ENCODE measurements at regions of chr11 and their contacts with region 1.

Region 1: DNA sequence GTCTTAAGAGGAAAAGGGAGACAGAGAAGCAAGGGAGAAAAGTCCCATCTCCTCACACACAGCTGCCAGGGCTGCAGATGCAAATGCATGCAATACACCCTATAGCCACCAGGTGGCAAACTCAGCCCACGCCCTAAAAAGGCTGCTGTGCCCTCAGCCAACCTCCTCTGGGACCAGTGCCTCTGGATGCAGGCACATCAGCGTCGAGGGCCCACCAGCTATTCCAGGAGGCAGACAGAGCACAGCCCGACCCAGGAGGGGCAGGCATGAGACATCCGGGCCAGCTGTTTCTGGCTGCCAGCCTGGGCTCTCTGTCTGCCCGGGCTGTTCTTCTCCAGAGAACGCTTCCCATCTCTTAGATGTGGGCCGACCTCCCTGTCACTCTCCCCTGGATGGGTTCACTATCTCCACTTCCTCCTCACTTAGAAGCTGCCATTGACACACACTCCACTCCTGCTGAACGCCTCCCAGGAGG is 39.7 kb downstream of the TPBGL start:
- DNase-seq: peak; percentile 79 to 91 (median 90)
- ATAC-seq: peak; percentile 85 to 86
- H3K4me3 ChIP-seq: no peak overlapping the region
- H3K27ac ChIP-seq: peak overlapping the region; percentile 2
- H3K4me1 ChIP-seq: peaks cover 3% of the 10 kb centered on the region
- H3K27me3 ChIP-seq: no peaks in the 10 kb centered on the region

Region 2: DNA sequence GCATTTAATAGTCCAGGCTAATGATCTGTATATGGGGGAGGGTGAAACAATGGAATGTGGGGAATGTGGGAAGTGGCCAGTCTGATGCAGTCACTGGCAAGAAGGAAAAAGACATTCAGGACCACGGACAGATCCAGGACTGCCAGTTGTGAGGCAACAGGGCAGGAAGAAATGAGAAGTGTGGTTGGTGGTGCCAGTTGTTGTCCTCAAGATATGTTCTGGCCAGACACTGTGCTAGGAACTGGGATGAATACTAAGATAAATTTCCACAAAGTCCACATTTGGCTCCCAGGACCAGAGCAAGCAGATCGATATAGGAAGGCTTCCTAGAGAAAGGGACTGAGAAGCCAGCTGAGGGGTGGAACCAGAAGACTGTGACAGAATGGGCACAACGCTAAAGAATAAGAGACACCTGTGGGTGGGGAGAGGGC is 46.5 kb before region 1 on chr11:
- intact Hi-C with region 1: no loop called
- DNase-seq: no peak
- ATAC-seq: no peak
- H3K4me3 ChIP-seq: no peak overlapping the region
- H3K27ac ChIP-seq: no peak overlapping the region
- H3K4me1 ChIP-seq: no peaks in the 10 kb centered on the region
- H3K27me3 ChIP-seq: no peaks in the 10 kb centered on the region

Region 3: DNA sequence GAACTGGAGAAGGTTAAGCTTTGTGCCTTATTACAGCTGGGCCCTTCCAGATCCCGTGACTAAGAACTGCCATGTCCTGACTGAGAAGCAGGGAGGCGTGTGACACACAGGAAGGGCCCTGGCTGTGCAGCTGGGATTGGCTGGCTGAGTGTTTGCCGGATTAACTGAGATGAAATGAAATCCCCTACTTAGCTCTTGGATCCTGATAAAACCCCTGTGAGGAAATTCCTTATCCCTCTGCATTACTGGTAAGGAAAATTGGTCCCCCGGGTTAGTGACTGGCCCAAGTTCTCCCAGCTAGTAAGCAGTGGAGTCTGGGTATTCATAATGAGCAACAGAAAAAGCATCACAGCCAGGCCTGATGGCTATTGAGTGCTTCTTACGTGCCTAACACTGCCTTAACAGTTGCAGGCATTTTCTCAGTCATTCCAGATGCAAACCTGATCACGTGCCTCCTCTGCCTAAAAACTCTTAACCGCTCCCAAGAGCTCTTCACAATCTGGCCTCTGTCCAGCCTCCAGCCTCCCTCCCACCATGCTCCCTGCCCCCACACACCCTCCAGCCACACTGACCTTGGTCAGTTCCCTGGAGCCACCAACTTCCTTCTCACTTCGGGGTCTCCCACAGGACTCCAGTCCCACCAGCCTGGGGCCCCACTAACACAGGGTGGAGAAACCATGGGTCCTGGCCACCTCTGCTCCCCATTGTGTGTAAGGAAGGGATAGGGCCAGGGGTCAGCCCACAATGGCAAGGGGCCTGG is 33.4 kb after region 1 on chr11:
- intact Hi-C with region 1: no loop called
- DNase-seq: peak; percentile 76 to 86 (median 83)
- ATAC-seq: peak; percentile 58 to 78
- H3K4me3 ChIP-seq: no peak overlapping the region
- H3K27ac ChIP-seq: peak overlapping the region; percentile 68
- H3K4me1 ChIP-seq: peaks cover 12% of the 10 kb centered on the region
- H3K27me3 ChIP-seq: no peaks in the 10 kb centered on the region

Region 4: GRCh38 chr11:75337195-75337654 is 57.0 kb after region 1 on chr11:
- intact Hi-C with region 1: loop called in 1 of 4 experiments (anchors 10 kb)
- DNase-seq: peak; percentile 60 to 75 (median 70)
- ATAC-seq: peak in 1 of 2 donors; percentile 13
- H3K4me3 ChIP-seq: no peak overlapping the region
- H3K27ac ChIP-seq: peak overlapping the region; percentile 12
- H3K4me1 ChIP-seq: peaks cover 40% of the 10 kb centered on the region
- H3K27me3 ChIP-seq: no peaks in the 10 kb centered on the region

Region 5: GRCh38 chr11:75371941-75372789 is 91.9 kb after region 1 on chr11:
- intact Hi-C with region 1: loop called in 1 of 4 experiments (anchors 5 kb)
- DNase-seq: no peak
- ATAC-seq: peak; percentile 73 to 81
- H3K4me3 ChIP-seq: no peak overlapping the region
- H3K27ac ChIP-seq: no peak overlapping the region
- H3K4me1 ChIP-seq: peaks cover 3% of the 10 kb centered on the region
- H3K27me3 ChIP-seq: no peaks in the 10 kb centered on the region

Region 6: GRCh38 chr11:75383246-75383645 is 103.0 kb after region 1 on chr11:
- intact Hi-C with region 1: loop called (anchors 1 to 5 kb)
- DNase-seq: no peak
- ATAC-seq: peak in 1 of 2 donors; percentile 3
- H3K4me3 ChIP-seq: no peak overlapping the region
- H3K27ac ChIP-seq: no peak overlapping the region
- H3K4me1 ChIP-seq: peaks cover under 1% of the 10 kb centered on the region
- H3K27me3 ChIP-seq: no peaks in the 10 kb centered on the region

Region 7: GRCh38 chr11:75388386-75389275 is 108.4 kb after region 1 on chr11:
- intact Hi-C with region 1: loop called (anchors 1 to 5 kb)
- DNase-seq: peak; percentile 79 to 83 (median 81)
- ATAC-seq: peak; percentile 47 to 54
- H3K4me3 ChIP-seq: no peak overlapping the region
- H3K27ac ChIP-seq: no peak overlapping the region
- H3K4me1 ChIP-seq: peaks cover 2% of the 10 kb centered on the region
- H3K27me3 ChIP-seq: no peaks in the 10 kb centered on the region

Region 8: GRCh38 chr11:75525596-75526541 is 245.6 kb after region 1 on chr11 and contains the start of gene GDPD5:
- intact Hi-C with region 1: loop called in 1 of 4 experiments (anchors 10 kb)
- DNase-seq: peak; percentile 87 to 93 (median 93)
- ATAC-seq: peak; percentile 95 to 96
- H3K4me3 ChIP-seq: peak within 1 kb of the TSS; percentile 79
- H3K27ac ChIP-seq: no peak within 1 kb of the TSS
- H3K4me1 ChIP-seq: no peaks in the 10 kb centered on the region
- H3K27me3 ChIP-seq: no peaks in the 10 kb centered on the region
- total RNA-seq, gene GDPD5: 5.3 to 8.2 (median 6.8) TPM

Measured in right cardiac atrium (tissue), 5 donors.